ENCODE measurements at regions of chr17 and their contacts with region 1.

Region 1: DNA sequence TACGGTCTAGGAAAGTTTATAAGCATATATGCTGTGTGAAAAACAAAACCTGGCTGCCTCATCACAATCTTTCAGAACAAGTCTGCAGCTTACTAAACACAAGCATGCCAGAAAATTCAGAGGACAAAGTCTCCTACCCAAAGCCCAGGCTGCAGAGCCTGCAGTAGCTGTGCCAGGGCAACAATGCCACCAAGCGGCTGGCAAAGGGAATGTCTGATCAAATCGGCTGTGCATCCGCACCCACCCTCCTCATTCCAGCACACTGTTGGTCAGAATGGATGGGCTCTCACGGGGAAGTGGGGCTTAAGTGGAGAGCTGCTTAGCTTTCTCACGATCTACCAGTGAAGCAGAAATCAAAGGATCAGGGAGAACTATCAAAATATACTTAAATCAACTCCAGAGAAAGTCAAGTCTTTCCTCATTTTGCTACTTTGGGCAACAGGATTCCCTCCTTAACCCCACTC is 73.5 kb downstream of the CYTH1 start:
- DNase-seq: peak in 8 of 9 experiments; percentile 39 to 76 (median 60)
- ATAC-seq: peak; percentile 79
- H3K4me3 ChIP-seq: no peak overlapping the region
- H3K4me3 Mint-ChIP-seq: peak overlapping the region; percentile 33
- H3K27ac ChIP-seq: peak overlapping the region in 1 of 2 experiments; percentile 49
- H3K27ac Mint-ChIP-seq: peak overlapping the region; percentile 88
- H3K4me1 ChIP-seq: peaks cover 40% of the 10 kb centered on the region
- H3K4me1 Mint-ChIP-seq: peaks cover 55% of the 10 kb centered on the region
- H3K27me3 ChIP-seq: no peaks in the 10 kb centered on the region
- H3K27me3 Mint-ChIP-seq: no peaks in the 10 kb centered on the region
- CTCF ChIP-seq: peak; percentile 84

Region 2: DNA sequence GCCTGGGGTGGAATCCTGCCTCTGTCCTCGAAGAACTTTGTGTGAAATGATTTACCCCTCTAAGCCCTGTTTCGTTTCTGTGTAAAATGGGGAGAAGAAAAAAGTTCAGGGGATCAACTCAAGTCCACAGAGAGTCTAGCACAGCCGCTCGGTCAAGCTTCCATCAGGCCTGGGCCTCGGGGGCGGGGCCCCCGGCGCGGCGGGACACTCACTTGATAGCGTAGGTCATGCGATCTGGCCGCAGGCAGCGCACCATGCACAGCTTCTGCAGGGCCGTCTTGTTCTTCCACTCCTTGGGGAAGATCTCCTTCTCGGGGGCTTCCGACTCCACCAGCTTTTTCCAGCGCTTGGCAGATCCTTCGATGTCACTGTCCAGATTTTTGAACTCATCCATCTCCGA is 264.1 kb before region 1 on chr17:
- CTCF ChIA-PET with region 1: interaction called, 15 read pairs
- POLR2A ChIA-PET with region 1: no interaction called
- intact Hi-C with region 1: no loop called
- DNase-seq: no peak
- ATAC-seq: no peak
- H3K4me3 ChIP-seq: no peak overlapping the region
- H3K4me3 Mint-ChIP-seq: no peak overlapping the region
- H3K27ac ChIP-seq: no peak overlapping the region
- H3K27ac Mint-ChIP-seq: no peak overlapping the region
- H3K4me1 ChIP-seq: no peaks in the 10 kb centered on the region
- H3K4me1 Mint-ChIP-seq: no peaks in the 10 kb centered on the region
- H3K27me3 ChIP-seq: no peaks in the 10 kb centered on the region
- H3K27me3 Mint-ChIP-seq: no peaks in the 10 kb centered on the region
- CTCF ChIP-seq: no peak

Region 3: GRCh38 chr17:78497115-78497540 is 211.4 kb before region 1 on chr17:
- CTCF ChIA-PET with region 1: interaction called, 3 read pairs
- POLR2A ChIA-PET with region 1: no interaction called
- intact Hi-C with region 1: loop called in 1 of 2 experiments (anchors 10 kb)
- DNase-seq: peak in 8 of 9 experiments; percentile 16 to 69 (median 48)
- ATAC-seq: peak; percentile 55
- H3K4me3 ChIP-seq: no peak overlapping the region
- H3K4me3 Mint-ChIP-seq: no peak overlapping the region
- H3K27ac ChIP-seq: no peak overlapping the region
- H3K27ac Mint-ChIP-seq: no peak overlapping the region
- H3K4me1 ChIP-seq: no peaks in the 10 kb centered on the region
- H3K4me1 Mint-ChIP-seq: no peaks in the 10 kb centered on the region
- H3K27me3 ChIP-seq: no peaks in the 10 kb centered on the region
- H3K27me3 Mint-ChIP-seq: no peaks in the 10 kb centered on the region
- CTCF ChIP-seq: peak; percentile 36

Region 4: GRCh38 chr17:78588258-78589030 is 120.1 kb before region 1 on chr17:
- CTCF ChIA-PET with region 1: no interaction called
- POLR2A ChIA-PET with region 1: no interaction called
- intact Hi-C with region 1: no loop called
- DNase-seq: no peak
- ATAC-seq: no peak
- H3K4me3 ChIP-seq: no peak overlapping the region
- H3K4me3 Mint-ChIP-seq: no peak overlapping the region
- H3K27ac ChIP-seq: no peak overlapping the region
- H3K27ac Mint-ChIP-seq: no peak overlapping the region
- H3K4me1 ChIP-seq: no peaks in the 10 kb centered on the region
- H3K4me1 Mint-ChIP-seq: peaks cover 6% of the 10 kb centered on the region
- H3K27me3 ChIP-seq: peaks cover 0 to 2% of the 10 kb centered on the region in 2 experiments
- H3K27me3 Mint-ChIP-seq: peaks cover 10% of the 10 kb centered on the region
- CTCF ChIP-seq: no peak

Region 5: GRCh38 chr17:78697554-78698343 is 10.8 kb before region 1 on chr17:
- CTCF ChIA-PET with region 1: interaction called, 25 read pairs
- POLR2A ChIA-PET with region 1: interaction called, 3 read pairs
- intact Hi-C with region 1: no loop called
- DNase-seq: no peak
- ATAC-seq: no peak
- H3K4me3 ChIP-seq: no peak overlapping the region
- H3K4me3 Mint-ChIP-seq: no peak overlapping the region
- H3K27ac ChIP-seq: no peak overlapping the region
- H3K27ac Mint-ChIP-seq: peak overlapping the region; percentile 75
- H3K4me1 ChIP-seq: no peaks in the 10 kb centered on the region
- H3K4me1 Mint-ChIP-seq: peaks cover 7% of the 10 kb centered on the region
- H3K27me3 ChIP-seq: no peaks in the 10 kb centered on the region
- H3K27me3 Mint-ChIP-seq: no peaks in the 10 kb centered on the region
- CTCF ChIP-seq: no peak

Region 6: GRCh38 chr17:78723001-78723796 is 14.7 kb after region 1 on chr17:
- CTCF ChIA-PET with region 1: interaction called, 36 read pairs
- POLR2A ChIA-PET with region 1: interaction called, 5 read pairs
- intact Hi-C with region 1: no loop called
- DNase-seq: no peak
- ATAC-seq: no peak
- H3K4me3 ChIP-seq: no peak overlapping the region
- H3K4me3 Mint-ChIP-seq: peak overlapping the region; percentile 53
- H3K27ac ChIP-seq: peak overlapping the region in 1 of 2 experiments; percentile 52
- H3K27ac Mint-ChIP-seq: peak overlapping the region; percentile 70
- H3K4me1 ChIP-seq: peaks cover 97% of the 10 kb centered on the region
- H3K4me1 Mint-ChIP-seq: peaks cover 94% of the 10 kb centered on the region
- H3K27me3 ChIP-seq: no peaks in the 10 kb centered on the region
- H3K27me3 Mint-ChIP-seq: no peaks in the 10 kb centered on the region
- CTCF ChIP-seq: no peak

Region 7: GRCh38 chr17:78736526-78737079 is 28.1 kb after region 1 on chr17:
- CTCF ChIA-PET with region 1: interaction called, 26 read pairs
- POLR2A ChIA-PET with region 1: interaction called, 5 read pairs
- intact Hi-C with region 1: no loop called
- DNase-seq: peak; percentile 35 to 85 (median 65)
- ATAC-seq: peak; percentile 81
- H3K4me3 ChIP-seq: peak overlapping the region; percentile 63 to 72
- H3K4me3 Mint-ChIP-seq: peak overlapping the region; percentile 88
- H3K27ac ChIP-seq: peak overlapping the region; percentile 58 to 79
- H3K27ac Mint-ChIP-seq: peak overlapping the region; percentile 92
- H3K4me1 ChIP-seq: peaks cover 86% of the 10 kb centered on the region
- H3K4me1 Mint-ChIP-seq: peaks cover 88% of the 10 kb centered on the region
- H3K27me3 ChIP-seq: no peaks in the 10 kb centered on the region
- H3K27me3 Mint-ChIP-seq: no peaks in the 10 kb centered on the region
- CTCF ChIP-seq: no peak

Region 8: GRCh38 chr17:78798695-78799559 is 90.4 kb after region 1 on chr17:
- CTCF ChIA-PET with region 1: interaction called, 24 read pairs
- POLR2A ChIA-PET with region 1: no interaction called
- intact Hi-C with region 1: no loop called
- DNase-seq: peak in 2 of 9 experiments; percentile 58 to 70
- ATAC-seq: peak; percentile 21
- H3K4me3 ChIP-seq: no peak overlapping the region
- H3K4me3 Mint-ChIP-seq: no peak overlapping the region
- H3K27ac ChIP-seq: peak overlapping the region in 1 of 2 experiments; percentile 0
- H3K27ac Mint-ChIP-seq: peak overlapping the region; percentile 80
- H3K4me1 ChIP-seq: peaks cover 21% of the 10 kb centered on the region
- H3K4me1 Mint-ChIP-seq: peaks cover 58% of the 10 kb centered on the region
- H3K27me3 ChIP-seq: no peaks in the 10 kb centered on the region
- H3K27me3 Mint-ChIP-seq: no peaks in the 10 kb centered on the region
- CTCF ChIP-seq: peak; percentile 41

Region 9: GRCh38 chr17:79053251-79053925 is 344.8 kb after region 1 on chr17:
- CTCF ChIA-PET with region 1: no interaction called
- POLR2A ChIA-PET with region 1: no interaction called
- intact Hi-C with region 1: no loop called
- DNase-seq: no peak
- ATAC-seq: no peak
- H3K4me3 ChIP-seq: no peak overlapping the region
- H3K4me3 Mint-ChIP-seq: no peak overlapping the region
- H3K27ac ChIP-seq: no peak overlapping the region
- H3K27ac Mint-ChIP-seq: no peak overlapping the region
- H3K4me1 ChIP-seq: no peaks in the 10 kb centered on the region
- H3K4me1 Mint-ChIP-seq: no peaks in the 10 kb centered on the region
- H3K27me3 ChIP-seq: no peaks in the 10 kb centered on the region
- H3K27me3 Mint-ChIP-seq: peaks cover 20% of the 10 kb centered on the region
- CTCF ChIP-seq: no peak

Measured in CD8-positive, alpha-beta T cell (primary cell).